BJ (cell line): ENCODE measurements at regions of chr9 and their contacts with region 1.

Region 1: GRCh38 chr9:2605246-2605645 is 16.3 kb upstream of the VLDLR start:
- DNase-seq: no peak
- H3K4me3 ChIP-seq: no peak overlapping the region
- H3K27me3 ChIP-seq: no peaks in the 10 kb centered on the region
- CTCF ChIP-seq: no peak

Region 2: DNA sequence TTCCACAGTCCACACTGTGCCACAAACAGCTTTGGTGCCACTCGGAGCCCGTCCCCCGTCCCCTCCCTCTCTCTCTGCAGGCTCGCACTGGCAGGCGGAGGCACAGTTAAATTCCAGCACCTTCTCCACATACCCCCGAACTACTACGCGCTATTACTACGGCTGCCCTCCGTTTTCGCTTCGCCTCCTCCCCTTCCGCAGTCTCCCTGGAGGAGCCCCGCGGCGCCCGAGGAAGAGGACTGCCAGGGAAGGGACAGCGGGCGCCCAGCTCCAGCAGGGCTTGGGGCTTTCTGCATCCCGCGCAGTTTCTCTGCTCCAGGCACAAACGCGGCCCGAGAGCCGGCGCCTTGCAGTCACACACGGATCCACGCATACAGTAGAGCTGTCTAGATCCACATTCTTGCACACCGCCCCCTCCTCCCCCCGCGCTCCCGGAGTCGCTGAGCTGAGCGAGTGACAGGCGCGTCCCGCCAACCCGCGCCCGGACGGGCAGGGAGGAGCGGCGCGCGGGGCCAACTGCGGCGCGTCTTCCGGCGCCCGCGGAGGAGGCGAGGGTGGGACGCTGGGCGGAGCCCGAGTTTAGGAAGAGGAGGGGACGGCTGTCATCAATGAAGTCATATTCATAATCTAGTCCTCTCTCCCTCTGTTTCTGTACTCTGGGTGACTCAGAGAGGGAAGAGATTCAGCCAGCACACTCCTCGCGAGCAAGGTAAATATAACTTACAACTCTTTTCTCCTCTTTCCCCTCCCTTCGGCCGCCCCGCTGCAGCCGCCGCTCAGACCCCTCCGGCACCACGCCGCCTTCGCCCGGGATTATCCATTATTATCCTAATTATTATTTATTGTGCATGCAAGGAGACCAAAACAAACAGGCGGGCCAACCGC is 590.3 kb before region 1 on chr9 and contains the start of gene SMARCA2:
- CTCF ChIA-PET with region 1: no interaction called
- POLR2A ChIA-PET with region 1: interaction called, 22 read pairs
- DNase-seq: peak; percentile 84
- H3K4me3 ChIP-seq: peak within 1 kb of the TSS; percentile 91
- H3K27me3 ChIP-seq: no peaks in the 10 kb centered on the region
- CTCF ChIP-seq: no peak
- polyA plus RNA-seq, gene SMARCA2: 58.4 and 67.4 TPM in 2 replicates